ENCODE measurements at regions of chr1 and their contacts with region 1.

Region 1: GRCh38 chr1:65419681-65420589 is 533 bp upstream of the LEPR start:
- DNase-seq: peak; percentile 99
- ATAC-seq: peak; percentile 91
- H3K4me3 ChIP-seq: peak overlapping the region; percentile 66 to 97 (median 92)
- H3K4me3 Mint-ChIP-seq: no peak overlapping the region
- H3K27ac ChIP-seq: peak overlapping the region; percentile 66 to 75
- H3K27ac Mint-ChIP-seq: no peak overlapping the region
- H3K4me1 ChIP-seq: peaks cover 14 to 23% of the 10 kb centered on the region in 2 donors
- H3K4me1 Mint-ChIP-seq: peaks cover 16% of the 10 kb centered on the region
- H3K27me3 ChIP-seq: peaks cover 0 to 8% (median 5%) of the 10 kb centered on the region in 4 experiments
- H3K27me3 Mint-ChIP-seq: peaks cover 15% of the 10 kb centered on the region
- CTCF ChIP-seq: no peak

Region 2: DNA sequence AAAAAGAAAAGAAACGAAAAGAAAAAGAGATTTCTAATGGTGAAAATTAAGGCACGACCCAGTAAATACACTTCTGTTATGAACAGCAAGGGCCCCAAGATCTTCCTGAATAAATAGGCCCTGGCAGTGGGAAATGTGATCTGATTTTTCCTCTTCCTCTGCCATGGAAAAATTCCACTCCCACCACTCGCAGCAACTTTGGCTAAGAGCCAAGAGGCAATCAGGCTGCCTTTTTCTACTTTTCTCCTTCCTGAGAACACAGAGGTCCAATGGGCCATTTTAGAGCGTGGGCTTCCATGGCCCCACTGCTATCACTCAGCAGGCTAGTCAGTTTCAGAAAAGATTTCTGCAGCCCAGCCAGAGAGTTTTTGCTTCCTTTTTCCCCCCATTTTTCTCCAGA is 305.6 kb before region 1 on chr1:
- CTCF ChIA-PET with region 1: no interaction called
- POLR2A ChIA-PET with region 1: no interaction called
- intact Hi-C with region 1: no loop called
- DNase-seq: no peak
- ATAC-seq: no peak
- H3K4me3 ChIP-seq: no peak overlapping the region
- H3K4me3 Mint-ChIP-seq: no peak overlapping the region
- H3K27ac ChIP-seq: no peak overlapping the region
- H3K27ac Mint-ChIP-seq: no peak overlapping the region
- H3K4me1 ChIP-seq: no peaks in the 10 kb centered on the region
- H3K4me1 Mint-ChIP-seq: no peaks in the 10 kb centered on the region
- H3K27me3 ChIP-seq: peaks cover 0 to 3% (median 0%) of the 10 kb centered on the region in 4 experiments
- H3K27me3 Mint-ChIP-seq: peaks cover 29% of the 10 kb centered on the region
- CTCF ChIP-seq: no peak

Region 3: DNA sequence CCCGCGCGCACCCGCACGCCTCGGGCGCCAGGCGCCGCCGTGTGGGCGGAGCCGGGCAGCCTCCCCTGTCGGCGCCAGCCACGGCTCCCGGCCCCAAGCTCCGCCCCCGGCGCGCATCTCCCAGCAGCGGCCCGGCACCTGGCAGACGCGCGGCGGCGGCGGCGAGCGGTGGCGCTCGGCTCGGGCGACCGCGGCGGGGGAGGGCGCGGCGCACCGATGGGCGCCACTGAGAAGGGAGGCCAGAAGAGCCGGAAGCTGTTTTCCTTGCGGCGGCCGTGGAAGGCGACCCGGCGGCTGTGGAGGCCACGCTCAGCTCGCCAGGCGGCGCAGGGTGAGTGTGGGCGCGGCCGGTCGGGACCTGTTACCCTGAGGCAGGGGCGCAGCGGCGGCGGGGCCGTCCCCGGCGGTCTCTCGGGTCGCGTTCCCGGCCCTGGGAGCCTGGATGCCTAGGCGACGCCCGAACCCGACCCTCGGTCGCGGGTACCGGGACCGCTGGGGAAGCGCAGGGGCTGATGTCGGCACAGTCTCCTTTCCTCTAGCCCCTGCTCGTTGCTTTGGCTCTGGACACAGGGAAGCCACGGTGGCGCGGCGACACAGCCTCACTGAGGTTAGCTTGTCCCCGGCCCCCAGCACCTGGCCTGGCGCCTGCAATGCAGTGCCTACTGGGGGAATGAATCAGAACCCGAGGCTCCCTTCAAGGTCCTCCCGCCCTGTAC is 165.5 kb before region 1 on chr1:
- CTCF ChIA-PET with region 1: interaction called, 4 read pairs
- POLR2A ChIA-PET with region 1: no interaction called
- intact Hi-C with region 1: loop called (anchors 2 kb)
- DNase-seq: peak; percentile 87
- ATAC-seq: peak; percentile 97
- H3K4me3 ChIP-seq: peak overlapping the region in 4 of 5 experiments; percentile 41 to 67 (median 62)
- H3K4me3 Mint-ChIP-seq: peak overlapping the region; percentile 91
- H3K27ac ChIP-seq: no peak overlapping the region
- H3K27ac Mint-ChIP-seq: no peak overlapping the region
- H3K4me1 ChIP-seq: peaks cover 16% of the 10 kb centered on the region in 2 donors
- H3K4me1 Mint-ChIP-seq: peaks cover 14% of the 10 kb centered on the region
- H3K27me3 ChIP-seq: peaks cover 0 to 23% (median 7%) of the 10 kb centered on the region in 4 experiments
- H3K27me3 Mint-ChIP-seq: peaks cover 38% of the 10 kb centered on the region
- CTCF ChIP-seq: peak; percentile 19

Region 4: GRCh38 chr1:65407877-65408276 is 12.1 kb before region 1 on chr1:
- CTCF ChIA-PET with region 1: no interaction called
- POLR2A ChIA-PET with region 1: no interaction called
- intact Hi-C with region 1: no loop called
- DNase-seq: no peak
- ATAC-seq: no peak
- H3K4me3 ChIP-seq: no peak overlapping the region
- H3K4me3 Mint-ChIP-seq: no peak overlapping the region
- H3K27ac ChIP-seq: no peak overlapping the region
- H3K27ac Mint-ChIP-seq: no peak overlapping the region
- H3K4me1 ChIP-seq: no peaks in the 10 kb centered on the region
- H3K4me1 Mint-ChIP-seq: no peaks in the 10 kb centered on the region
- H3K27me3 ChIP-seq: no peaks in the 10 kb centered on the region
- H3K27me3 Mint-ChIP-seq: peaks cover 42% of the 10 kb centered on the region
- CTCF ChIP-seq: no peak

Region 5: GRCh38 chr1:65431111-65431705 is 11.3 kb after region 1 on chr1:
- CTCF ChIA-PET with region 1: interaction called, 15 read pairs
- POLR2A ChIA-PET with region 1: no interaction called
- intact Hi-C with region 1: no loop called
- DNase-seq: peak; percentile 31
- ATAC-seq: no peak
- H3K4me3 ChIP-seq: no peak overlapping the region
- H3K4me3 Mint-ChIP-seq: no peak overlapping the region
- H3K27ac ChIP-seq: no peak overlapping the region
- H3K27ac Mint-ChIP-seq: no peak overlapping the region
- H3K4me1 ChIP-seq: no peaks in the 10 kb centered on the region
- H3K4me1 Mint-ChIP-seq: no peaks in the 10 kb centered on the region
- H3K27me3 ChIP-seq: no peaks in the 10 kb centered on the region
- H3K27me3 Mint-ChIP-seq: no peaks in the 10 kb centered on the region
- CTCF ChIP-seq: peak; percentile 79

Region 6: GRCh38 chr1:65449214-65449842 is 29.4 kb after region 1 on chr1:
- CTCF ChIA-PET with region 1: no interaction called
- POLR2A ChIA-PET with region 1: no interaction called
- intact Hi-C with region 1: no loop called
- DNase-seq: no peak
- ATAC-seq: no peak
- H3K4me3 ChIP-seq: no peak overlapping the region
- H3K4me3 Mint-ChIP-seq: no peak overlapping the region
- H3K27ac ChIP-seq: no peak overlapping the region
- H3K27ac Mint-ChIP-seq: no peak overlapping the region
- H3K4me1 ChIP-seq: no peaks in the 10 kb centered on the region
- H3K4me1 Mint-ChIP-seq: no peaks in the 10 kb centered on the region
- H3K27me3 ChIP-seq: no peaks in the 10 kb centered on the region
- H3K27me3 Mint-ChIP-seq: no peaks in the 10 kb centered on the region
- CTCF ChIP-seq: no peak

Region 7: GRCh38 chr1:65467536-65467935 is 47.6 kb after region 1 on chr1:
- CTCF ChIA-PET with region 1: no interaction called
- POLR2A ChIA-PET with region 1: no interaction called
- intact Hi-C with region 1: no loop called
- DNase-seq: no peak
- ATAC-seq: no peak
- H3K4me3 ChIP-seq: no peak overlapping the region
- H3K4me3 Mint-ChIP-seq: no peak overlapping the region
- H3K27ac ChIP-seq: no peak overlapping the region
- H3K27ac Mint-ChIP-seq: no peak overlapping the region
- H3K4me1 ChIP-seq: no peaks in the 10 kb centered on the region
- H3K4me1 Mint-ChIP-seq: no peaks in the 10 kb centered on the region
- H3K27me3 ChIP-seq: no peaks in the 10 kb centered on the region
- H3K27me3 Mint-ChIP-seq: no peaks in the 10 kb centered on the region
- CTCF ChIP-seq: no peak

Measured in B cell (primary cell).